ENCODE measurements at regions of chr13 and their contacts with region 1.

Region 1: GRCh38 chr13:99200432-99201167 is at the start of gene UBAC2:
- DNase-seq: peak; percentile 98
- ATAC-seq: peak; percentile 77
- H3K4me3 Mint-ChIP-seq: peak within 1 kb of the TSS; percentile 82
- H3K27ac Mint-ChIP-seq: peak within 1 kb of the TSS; percentile 97
- H3K4me1 Mint-ChIP-seq: peaks cover 62% of the 10 kb centered on the region
- H3K27me3 Mint-ChIP-seq: no peaks in the 10 kb centered on the region
- total RNA-seq, gene UBAC2: 48.4 to 56.3 TPM

Region 2: DNA sequence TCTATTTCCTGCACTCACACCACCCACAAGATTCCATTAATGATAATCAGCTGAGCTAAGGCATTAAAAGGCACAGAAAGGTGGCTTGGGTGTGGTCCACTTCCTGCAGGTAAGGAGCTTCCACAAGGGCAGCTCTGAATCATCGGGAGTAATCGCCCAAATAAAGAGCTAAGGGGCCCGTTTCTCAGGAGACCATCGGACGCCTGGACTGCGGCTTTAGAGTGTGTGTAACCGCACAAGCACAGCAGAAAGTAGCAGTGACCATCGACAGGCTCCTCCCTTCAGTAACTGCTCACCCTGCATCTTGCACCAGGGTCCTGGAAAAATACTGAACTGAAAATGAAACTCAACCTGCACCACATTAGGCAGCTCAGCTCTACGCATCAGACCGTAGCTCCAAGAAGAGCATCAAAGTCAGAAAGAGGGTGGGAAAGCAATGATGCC is 629.6 kb before region 1 on chr13:
- CTCF ChIA-PET with region 1: no interaction called
- POLR2A ChIA-PET with region 1: no interaction called
- intact Hi-C with region 1: loop called (anchors 5 kb)
- DNase-seq: peak; percentile 65
- ATAC-seq: peak; percentile 58
- H3K4me3 Mint-ChIP-seq: peak overlapping the region; percentile 75
- H3K27ac Mint-ChIP-seq: peak overlapping the region; percentile 73
- H3K4me1 Mint-ChIP-seq: peaks cover 87% of the 10 kb centered on the region
- H3K27me3 Mint-ChIP-seq: no peaks in the 10 kb centered on the region

Region 3: DNA sequence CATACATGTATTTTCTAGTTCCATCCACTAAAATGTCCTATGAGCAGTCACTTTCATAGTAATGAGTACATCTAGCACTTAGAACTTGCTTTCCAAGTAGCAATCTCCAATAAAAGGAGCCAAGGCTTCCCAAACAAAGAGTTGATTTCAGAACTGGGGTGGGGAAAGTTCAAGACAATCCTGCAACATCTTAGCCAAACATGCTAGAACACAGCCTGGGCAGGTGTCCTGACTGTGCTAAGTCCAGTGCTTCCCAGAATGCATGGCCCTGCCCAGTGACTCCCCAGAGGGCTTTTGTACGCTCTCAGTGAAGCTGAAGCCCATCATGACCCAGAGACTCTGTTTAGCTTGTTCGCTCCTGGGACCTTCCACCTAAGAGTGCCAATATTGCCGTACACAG is 106.6 kb before region 1 on chr13:
- CTCF ChIA-PET with region 1: no interaction called
- POLR2A ChIA-PET with region 1: no interaction called
- intact Hi-C with region 1: no loop called
- DNase-seq: no peak
- ATAC-seq: no peak
- H3K4me3 Mint-ChIP-seq: no peak overlapping the region
- H3K27ac Mint-ChIP-seq: no peak overlapping the region
- H3K4me1 Mint-ChIP-seq: no peaks in the 10 kb centered on the region
- H3K27me3 Mint-ChIP-seq: no peaks in the 10 kb centered on the region

Region 4: GRCh38 chr13:99176309-99177276 is 24.0 kb before region 1 on chr13:
- CTCF ChIA-PET with region 1: interaction called, 10 read pairs
- POLR2A ChIA-PET with region 1: interaction called, 4 read pairs
- intact Hi-C with region 1: loop called in 1 of 2 experiments (anchors 2 kb)
- DNase-seq: peak; percentile 86
- ATAC-seq: peak; percentile 91
- H3K4me3 Mint-ChIP-seq: peak overlapping the region; percentile 51
- H3K27ac Mint-ChIP-seq: no peak overlapping the region
- H3K4me1 Mint-ChIP-seq: peaks cover 41% of the 10 kb centered on the region
- H3K27me3 Mint-ChIP-seq: no peaks in the 10 kb centered on the region

Region 5: DNA sequence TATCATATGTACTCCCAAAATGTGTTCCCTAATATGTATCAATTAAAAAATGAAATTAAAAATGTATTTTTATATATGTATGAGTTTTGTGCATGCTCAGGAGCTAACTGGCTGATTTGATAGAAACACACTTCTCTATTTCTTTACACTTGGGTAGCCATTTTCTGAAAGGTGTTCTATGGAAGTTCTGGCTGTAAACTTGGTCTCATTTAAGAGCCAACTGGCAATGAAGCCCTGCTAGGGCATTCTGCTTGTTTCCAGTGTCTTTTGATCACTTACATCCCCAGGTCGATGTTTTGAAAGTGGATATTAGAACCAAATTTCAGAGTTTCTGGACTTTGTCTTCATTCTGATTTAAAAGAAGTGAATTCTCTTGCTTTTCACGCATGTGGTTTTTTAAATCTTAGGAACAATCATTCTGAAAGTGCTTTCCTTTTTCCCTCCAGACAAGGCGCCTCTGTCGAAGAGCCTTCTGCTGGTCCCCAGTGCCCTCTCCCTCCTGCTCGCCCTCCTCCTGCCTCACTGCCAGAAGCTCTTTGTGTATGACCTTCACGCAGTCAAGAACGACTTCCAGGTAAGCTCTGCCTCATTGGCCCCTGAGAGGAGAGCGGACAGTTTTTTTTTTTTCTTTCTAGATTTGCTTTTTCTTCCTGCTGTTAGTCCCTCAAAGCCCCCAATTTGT is 37.5 kb after region 1 on chr13:
- CTCF ChIA-PET with region 1: interaction called, 3 read pairs
- POLR2A ChIA-PET with region 1: no interaction called
- intact Hi-C with region 1: loop called in 1 of 2 experiments (anchors 5 kb)
- DNase-seq: peak; percentile 58
- ATAC-seq: peak; percentile 88
- H3K4me3 Mint-ChIP-seq: peak overlapping the region; percentile 64
- H3K27ac Mint-ChIP-seq: peak overlapping the region; percentile 92
- H3K4me1 Mint-ChIP-seq: peaks cover 60% of the 10 kb centered on the region
- H3K27me3 Mint-ChIP-seq: no peaks in the 10 kb centered on the region

Region 6: GRCh38 chr13:99307648-99308339 is 107.2 kb after region 1 on chr13:
- CTCF ChIA-PET with region 1: interaction called, 4 read pairs
- POLR2A ChIA-PET with region 1: interaction called, 4 read pairs
- intact Hi-C with region 1: loop called in 1 of 2 experiments (anchors 2 kb)
- DNase-seq: peak; percentile 88
- ATAC-seq: peak; percentile 82
- H3K4me3 Mint-ChIP-seq: peak overlapping the region; percentile 85
- H3K27ac Mint-ChIP-seq: peak overlapping the region; percentile 98
- H3K4me1 Mint-ChIP-seq: peaks cover 73% of the 10 kb centered on the region
- H3K27me3 Mint-ChIP-seq: no peaks in the 10 kb centered on the region

Region 7: DNA sequence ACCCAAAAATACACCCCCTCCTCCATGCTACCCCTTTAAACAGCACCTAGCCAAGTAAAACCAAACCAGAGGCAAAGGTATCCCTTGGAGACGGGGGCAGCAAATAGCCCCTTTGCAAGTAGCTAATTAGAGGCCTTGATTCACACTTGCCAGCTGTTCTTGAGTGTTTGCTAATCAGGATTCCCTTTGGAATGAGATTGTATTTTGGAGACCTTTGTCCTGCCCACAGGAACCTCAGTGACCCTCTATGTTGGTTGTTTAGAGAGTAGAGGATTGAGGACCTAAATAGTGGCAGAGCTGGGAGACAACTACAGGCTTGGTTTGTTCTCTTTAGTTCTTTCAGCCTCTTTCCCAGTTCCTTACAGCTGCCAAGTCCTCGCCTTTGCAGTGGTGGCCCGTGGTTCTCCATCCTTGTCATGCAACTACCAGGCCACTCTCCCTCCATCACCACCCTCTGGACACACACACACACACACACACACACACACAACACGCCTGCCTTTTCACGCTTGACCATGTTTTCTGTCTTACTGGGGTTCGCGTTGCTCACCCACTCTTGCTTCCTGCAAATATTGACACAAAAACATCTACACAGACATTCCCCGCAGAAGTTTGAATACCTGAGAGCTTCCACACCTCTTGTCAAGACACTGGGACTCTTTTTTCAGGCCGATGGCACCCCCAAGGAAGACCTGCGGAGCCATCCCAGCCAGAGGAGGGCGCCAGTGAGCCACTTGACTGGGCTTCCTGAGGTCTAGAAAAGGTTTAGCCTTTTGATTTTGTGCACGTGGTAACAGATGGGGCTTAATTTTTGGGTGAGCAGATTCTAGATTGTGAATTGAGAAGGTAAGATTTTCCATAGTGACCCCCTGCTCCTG is 186.6 kb after region 1 on chr13:
- CTCF ChIA-PET with region 1: interaction called, 3 read pairs
- POLR2A ChIA-PET with region 1: no interaction called
- intact Hi-C with region 1: loop called in 1 of 2 experiments (anchors 2 kb)
- DNase-seq: peak; percentile 94
- ATAC-seq: peak; percentile 62
- H3K4me3 Mint-ChIP-seq: no peak overlapping the region
- H3K27ac Mint-ChIP-seq: peak overlapping the region; percentile 76
- H3K4me1 Mint-ChIP-seq: peaks cover 63% of the 10 kb centered on the region
- H3K27me3 Mint-ChIP-seq: no peaks in the 10 kb centered on the region